ENCODE measurements at regions of chr6 and their contacts with region 1.

Region 1: DNA sequence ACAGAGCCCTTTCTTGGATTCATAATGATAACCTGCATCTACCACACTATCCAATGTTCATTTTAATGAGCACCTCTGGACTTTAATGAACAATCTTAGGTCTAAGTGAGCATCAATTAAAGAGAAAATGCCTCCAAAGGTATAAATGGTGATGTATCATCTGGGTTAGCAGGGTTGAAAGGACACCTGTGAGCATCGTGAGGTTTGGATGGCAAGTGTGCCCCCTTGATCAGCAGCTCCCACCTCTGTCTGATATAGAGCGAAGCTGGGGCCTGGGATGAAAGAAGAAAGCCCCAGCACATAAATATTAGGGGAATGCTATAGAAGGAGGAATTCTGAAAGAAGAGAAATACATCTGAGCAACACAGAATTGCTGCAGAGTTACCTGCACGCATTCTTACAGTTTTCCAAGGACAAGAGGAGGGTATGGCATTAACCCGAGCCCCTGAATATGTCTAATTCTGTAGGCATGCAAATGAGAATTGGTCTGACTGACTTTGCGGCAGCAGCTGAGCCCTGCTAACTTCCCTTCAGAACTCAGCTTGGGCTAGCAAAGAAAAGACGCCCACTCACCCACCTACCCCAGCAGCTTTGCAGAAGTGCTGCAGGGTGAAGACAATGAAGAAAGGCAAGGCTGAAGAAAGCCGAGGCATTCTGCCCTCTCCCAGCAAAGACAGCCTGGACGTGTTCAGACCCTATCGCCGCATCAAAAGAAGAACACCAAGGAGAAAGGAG is 136.2 kb downstream of the GMPR start:
- DNase-seq: peak; percentile 18
- ATAC-seq: peak; percentile 87
- H3K4me3 Mint-ChIP-seq: peak overlapping the region; percentile 75
- H3K27ac Mint-ChIP-seq: peak overlapping the region; percentile 78
- H3K4me1 Mint-ChIP-seq: peaks cover 68% of the 10 kb centered on the region
- H3K27me3 Mint-ChIP-seq: no peaks in the 10 kb centered on the region
- CTCF ChIP-seq: no peak

Region 2: DNA sequence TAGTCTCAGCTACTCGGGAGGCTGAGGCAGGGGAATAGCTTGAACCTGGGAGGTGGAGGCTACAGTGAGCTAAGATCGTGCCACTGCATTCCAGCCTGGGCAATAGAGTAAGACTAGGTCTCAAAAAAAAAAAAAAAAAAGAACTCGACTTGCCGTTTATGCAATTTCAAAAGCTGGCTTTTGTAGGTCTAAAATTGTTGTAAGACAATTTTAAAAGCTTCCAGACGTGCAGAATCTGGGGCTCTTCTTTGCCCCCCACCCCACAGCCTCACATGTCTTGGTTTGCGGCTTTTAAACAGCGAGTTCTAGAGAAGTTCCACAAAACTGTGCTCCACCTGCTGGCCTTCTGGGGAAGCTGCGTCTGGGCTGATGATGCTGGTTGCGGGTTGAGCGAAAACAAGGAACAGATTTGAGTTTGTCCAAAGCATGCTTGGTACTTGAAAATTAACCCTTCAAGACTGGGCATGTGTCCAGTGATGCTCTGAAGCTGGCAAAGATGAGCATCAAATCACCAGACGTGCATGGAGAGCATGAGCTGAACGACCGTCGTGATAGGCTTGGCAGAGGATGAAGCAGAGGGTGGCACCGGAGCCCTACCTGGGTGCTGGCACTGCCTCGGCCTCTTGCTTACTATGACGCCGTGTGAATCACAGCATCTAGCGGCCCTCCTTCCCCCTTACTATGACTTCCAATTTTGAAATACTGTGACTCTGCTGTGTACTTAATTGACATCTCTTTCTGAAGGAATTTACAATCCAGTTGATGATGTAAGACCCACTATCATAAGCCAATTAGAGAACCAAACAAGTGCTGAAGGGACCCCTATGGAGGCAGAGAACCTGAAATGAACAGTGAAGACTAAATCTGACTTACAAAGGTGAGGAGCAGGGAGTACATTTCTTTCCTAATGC is 35.2 kb after region 1 on chr6:
- CTCF ChIA-PET with region 1: interaction called, 4 read pairs
- POLR2A ChIA-PET with region 1: no interaction called
- intact Hi-C with region 1: loop called (anchors 2 kb)
- DNase-seq: peak; percentile 32
- ATAC-seq: peak; percentile 60
- H3K4me3 Mint-ChIP-seq: peak overlapping the region; percentile 63
- H3K27ac Mint-ChIP-seq: peak overlapping the region; percentile 37
- H3K4me1 Mint-ChIP-seq: peaks cover 66% of the 10 kb centered on the region
- H3K27me3 Mint-ChIP-seq: no peaks in the 10 kb centered on the region
- CTCF ChIP-seq: no peak

Region 3: DNA sequence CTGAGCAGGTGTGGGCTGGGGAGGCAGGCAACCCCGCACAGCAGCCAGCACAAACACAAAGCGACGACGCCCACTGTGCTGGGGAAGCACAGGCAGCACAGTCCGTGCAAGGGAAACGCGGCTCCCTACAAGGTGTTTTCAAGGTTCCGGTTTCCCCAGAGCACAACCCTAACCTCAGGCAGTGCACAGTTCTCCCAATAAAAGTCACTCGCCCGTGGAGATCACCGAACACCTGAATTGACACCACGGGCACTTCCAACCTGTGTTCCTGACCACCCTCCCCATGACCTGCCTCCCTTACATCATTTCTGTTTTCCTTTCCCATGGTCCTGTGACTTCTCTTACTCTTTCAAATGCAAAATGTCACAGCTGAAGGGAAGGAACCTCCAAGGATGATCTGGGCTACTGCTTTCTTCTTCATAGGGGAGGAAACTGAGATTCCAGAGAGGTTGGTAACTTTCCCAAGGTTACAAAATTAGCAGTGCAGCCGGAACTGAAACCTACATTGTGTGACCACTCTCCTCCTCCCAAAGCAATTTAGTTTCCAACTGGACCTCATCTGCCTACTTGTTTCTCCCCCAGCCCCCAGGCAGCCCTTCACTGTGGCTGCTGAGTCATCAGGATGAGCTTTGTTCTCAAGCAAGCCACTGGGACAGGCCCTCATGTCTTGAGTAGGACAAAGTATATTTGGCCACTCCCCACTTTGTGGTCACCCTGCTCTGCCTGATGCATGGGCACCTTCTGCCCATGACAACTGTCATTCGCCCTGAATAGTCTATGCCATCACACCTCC is 261.4 kb after region 1 on chr6:
- CTCF ChIA-PET with region 1: no interaction called
- POLR2A ChIA-PET with region 1: no interaction called
- intact Hi-C with region 1: no loop called
- DNase-seq: no peak
- ATAC-seq: no peak
- H3K4me3 Mint-ChIP-seq: no peak overlapping the region
- H3K27ac Mint-ChIP-seq: no peak overlapping the region
- H3K4me1 Mint-ChIP-seq: peaks cover 27% of the 10 kb centered on the region
- H3K27me3 Mint-ChIP-seq: no peaks in the 10 kb centered on the region
- CTCF ChIP-seq: no peak

Region 4: DNA sequence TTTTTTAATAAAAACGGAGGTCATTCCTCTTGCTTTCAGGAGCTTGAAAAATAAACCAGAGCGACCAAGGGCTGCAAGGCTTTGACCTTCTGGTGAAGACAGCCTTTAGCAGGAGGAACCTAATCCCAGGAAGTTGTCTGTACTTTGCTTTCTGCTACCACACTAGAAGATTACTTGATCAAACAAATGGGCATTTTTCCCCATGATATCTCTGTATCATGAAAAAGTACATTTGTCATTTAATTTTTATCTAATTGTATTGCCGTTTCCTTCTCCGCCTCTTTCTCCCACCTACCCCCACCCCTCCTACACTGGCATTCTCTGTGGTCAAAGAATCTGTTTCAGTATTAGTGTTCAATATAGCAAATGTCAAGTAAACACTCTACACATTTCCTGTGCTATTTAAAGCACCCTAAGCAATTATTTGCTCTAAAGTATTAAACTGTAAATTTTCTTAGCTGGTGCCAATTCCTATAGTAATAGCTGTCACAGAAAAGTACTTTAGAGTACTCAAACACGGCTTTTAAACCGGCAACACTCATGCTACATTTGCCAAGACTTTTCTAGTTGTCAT is 356.9 kb after region 1 on chr6:
- CTCF ChIA-PET with region 1: no interaction called
- POLR2A ChIA-PET with region 1: interaction called, 10 read pairs
- intact Hi-C with region 1: no loop called
- DNase-seq: no peak
- ATAC-seq: peak; percentile 62
- H3K4me3 Mint-ChIP-seq: peak overlapping the region; percentile 52
- H3K27ac Mint-ChIP-seq: no peak overlapping the region
- H3K4me1 Mint-ChIP-seq: peaks cover 21% of the 10 kb centered on the region
- H3K27me3 Mint-ChIP-seq: no peaks in the 10 kb centered on the region
- CTCF ChIP-seq: no peak